ENCODE measurements at regions of chr4 and their contacts with region 1.

Region 1: GRCh38 chr4:2871911-2872310 is 28.3 kb downstream of the ADD1 start:
- DNase-seq: no peak
- ATAC-seq: peak in 1 of 8 donors; percentile 32
- H3K4me3 ChIP-seq: no peak overlapping the region
- H3K27ac ChIP-seq: peak overlapping the region in 4 of 10 donors; percentile 5 to 32 (median 25)
- H3K4me1 ChIP-seq: peaks cover 20 to 99% (median 85%) of the 10 kb centered on the region in 9 donors
- H3K27me3 ChIP-seq: no peaks in the 10 kb centered on the region
- CTCF ChIP-seq: no peak

Region 2: DNA sequence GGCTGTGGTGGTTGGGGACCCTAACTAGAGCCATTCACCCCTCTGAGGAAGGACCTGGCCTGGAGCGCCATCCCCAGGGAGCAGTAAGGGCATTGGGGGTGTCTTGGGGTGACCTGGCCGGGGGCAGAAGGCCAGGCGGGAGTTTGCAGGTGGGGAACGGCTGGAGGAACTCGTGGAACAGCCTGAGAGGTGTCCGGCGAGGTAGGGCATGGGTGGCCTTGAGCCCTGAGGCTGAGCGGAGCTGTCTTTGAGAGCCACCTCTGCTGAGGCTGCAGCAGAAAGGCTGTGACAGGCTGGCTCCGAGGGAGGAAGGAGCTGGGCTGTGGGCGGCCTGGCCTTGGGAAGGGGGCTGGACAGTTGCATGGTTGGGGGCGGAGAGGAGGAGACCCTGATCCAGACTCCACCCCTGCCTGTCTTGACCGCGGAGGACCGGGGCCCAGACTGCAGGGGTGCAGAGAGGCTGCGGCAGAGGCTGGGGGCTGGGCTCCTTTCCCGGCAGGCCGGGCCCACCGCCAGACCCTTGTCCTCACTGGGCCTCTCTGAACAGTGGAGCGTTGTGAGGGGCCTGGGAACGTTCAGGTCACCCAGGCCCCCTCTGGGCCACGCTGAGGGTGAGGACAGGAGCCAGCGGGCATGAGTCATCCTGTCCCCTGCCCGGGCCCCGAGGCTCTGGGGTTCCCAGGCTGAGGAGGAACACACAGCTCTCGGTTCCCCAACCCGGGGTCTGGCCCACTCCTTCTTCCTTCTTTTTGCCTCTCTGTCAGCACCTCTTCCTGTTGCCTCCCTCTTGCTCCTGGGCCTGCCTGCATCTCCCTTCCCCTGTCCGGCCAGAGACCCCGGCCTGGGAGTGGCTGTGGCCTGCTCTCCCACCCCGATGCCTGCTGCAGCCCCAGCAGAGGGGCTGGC is 71.0 kb before region 1 on chr4:
- intact Hi-C with region 1: loop called in 1 of 10 experiments (anchors 5 kb)
- DNase-seq: peak; percentile 82 to 89
- ATAC-seq: peak; percentile 63 to 78 (median 74)
- H3K4me3 ChIP-seq: peak overlapping the region in 9 of 10 donors; percentile 8 to 57 (median 33)
- H3K27ac ChIP-seq: peak overlapping the region; percentile 52 to 96 (median 88)
- H3K4me1 ChIP-seq: peaks cover 61 to 99% (median 96%) of the 10 kb centered on the region in 9 donors
- H3K27me3 ChIP-seq: no peaks in the 10 kb centered on the region
- CTCF ChIP-seq: no peak